ENCODE measurements at regions of chr1 and their contacts with region 1.

Region 1: GRCh38 chr1:40849801-40850592 is 12.2 kb downstream of the CITED4 start:
- DNase-seq: peak; percentile 71 to 78 (median 77)
- ATAC-seq: peak; percentile 91
- H3K4me3 ChIP-seq: no peak overlapping the region
- H3K4me1 ChIP-seq: no peaks in the 10 kb centered on the region
- CTCF ChIP-seq: peak; percentile 63

Region 2: GRCh38 chr1:40612345-40612831 is 237.6 kb before region 1 on chr1:
- intact Hi-C with region 1: loop called (anchors 10 kb)
- DNase-seq: peak in 2 of 3 donors; percentile 53 to 89
- ATAC-seq: peak; percentile 85
- H3K4me3 ChIP-seq: no peak overlapping the region
- H3K4me1 ChIP-seq: no peaks in the 10 kb centered on the region
- CTCF ChIP-seq: peak; percentile 64

Region 3: DNA sequence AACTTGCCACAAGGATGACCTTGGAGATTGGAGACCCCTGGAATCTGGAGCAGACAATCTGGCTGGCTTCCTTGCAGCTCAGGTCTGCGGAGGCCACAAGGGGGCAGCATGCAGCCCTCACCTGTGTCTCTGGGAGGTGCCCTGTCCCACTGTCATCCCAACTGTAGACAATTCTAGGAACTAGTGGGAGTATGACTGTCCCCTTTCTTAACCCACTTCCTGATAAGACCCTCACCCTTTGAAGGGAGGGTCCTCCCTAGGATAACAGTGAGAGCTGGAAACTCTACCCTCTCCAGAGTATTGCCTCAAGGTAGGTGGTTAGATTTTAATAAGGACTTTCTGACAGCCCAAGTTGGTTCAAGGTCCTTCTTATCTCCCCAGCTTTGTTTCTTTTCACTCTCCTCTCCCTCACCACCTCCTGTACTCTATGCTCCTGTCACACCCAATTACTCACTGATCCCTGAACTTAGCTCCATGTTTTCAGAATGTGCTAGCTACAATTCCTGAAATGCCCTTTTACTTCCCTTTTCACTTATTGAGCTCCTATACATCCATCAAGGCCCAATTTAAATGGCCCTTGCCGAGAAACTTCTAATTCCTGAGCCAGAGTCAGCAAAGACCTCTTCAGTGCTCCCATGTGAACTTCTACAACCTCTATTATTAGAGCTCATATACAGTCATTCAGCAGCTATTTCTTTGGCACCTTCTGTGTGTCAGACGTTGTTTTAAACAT is 75.6 kb before region 1 on chr1:
- intact Hi-C with region 1: loop called in 1 of 2 experiments (anchors 10 kb)
- DNase-seq: peak in 2 of 3 donors; percentile 78 to 84
- ATAC-seq: peak; percentile 87
- H3K4me3 ChIP-seq: no peak overlapping the region
- H3K4me1 ChIP-seq: peaks cover 5% of the 10 kb centered on the region
- CTCF ChIP-seq: peak; percentile 71

Region 4: GRCh38 chr1:40951943-40952743 is 102.1 kb after region 1 on chr1:
- intact Hi-C with region 1: loop called (anchors 2 kb)
- DNase-seq: peak; percentile 68 to 81 (median 77)
- ATAC-seq: peak; percentile 95
- H3K4me3 ChIP-seq: no peak overlapping the region
- H3K4me1 ChIP-seq: no peaks in the 10 kb centered on the region
- CTCF ChIP-seq: peak; percentile 81

Region 5: GRCh38 chr1:41161846-41162245 is 311.8 kb after region 1 on chr1:
- intact Hi-C with region 1: no loop called
- DNase-seq: no peak
- ATAC-seq: no peak
- H3K4me3 ChIP-seq: no peak overlapping the region
- H3K4me1 ChIP-seq: no peaks in the 10 kb centered on the region
- CTCF ChIP-seq: no peak